ENCODE measurements at regions of chr1 and their contacts with region 1.

Region 1: GRCh38 chr1:92784639-92785500 is at the start of gene EVI5:
- DNase-seq: peak; percentile 94 to 97
- H3K4me3 ChIP-seq: peak within 1 kb of the TSS; percentile 66
- H3K4me3 Mint-ChIP-seq: peak within 1 kb of the TSS; percentile 83
- H3K27ac Mint-ChIP-seq: peak within 1 kb of the TSS; percentile 91
- H3K4me1 ChIP-seq: no peaks in the 10 kb centered on the region
- H3K4me1 Mint-ChIP-seq: peaks cover 7% of the 10 kb centered on the region
- H3K27me3 ChIP-seq: no peaks in the 10 kb centered on the region
- H3K27me3 Mint-ChIP-seq: no peaks in the 10 kb centered on the region
- CTCF ChIP-seq: peak in 1 of 2 experiments; percentile 19
- total RNA-seq, gene EVI5: 31.2 and 32.8 TPM in 2 replicates

Region 2: GRCh38 chr1:92709738-92710137 is 75.1 kb before region 1 on chr1:
- CTCF ChIA-PET with region 1: no interaction called
- POLR2A ChIA-PET with region 1: no interaction called
- intact Hi-C with region 1: no loop called
- DNase-seq: peak; percentile 24 to 34
- H3K4me3 ChIP-seq: no peak overlapping the region
- H3K4me3 Mint-ChIP-seq: no peak overlapping the region
- H3K27ac Mint-ChIP-seq: no peak overlapping the region
- H3K4me1 ChIP-seq: peaks cover 59% of the 10 kb centered on the region
- H3K4me1 Mint-ChIP-seq: peaks cover 29% of the 10 kb centered on the region
- H3K27me3 ChIP-seq: no peaks in the 10 kb centered on the region
- H3K27me3 Mint-ChIP-seq: no peaks in the 10 kb centered on the region
- CTCF ChIP-seq: no peak

Region 3: GRCh38 chr1:92749024-92749634 is 35.7 kb before region 1 on chr1:
- CTCF ChIA-PET with region 1: interaction called, 11 read pairs
- POLR2A ChIA-PET with region 1: interaction called, 3 read pairs
- intact Hi-C with region 1: loop called (anchors 2 kb)
- DNase-seq: peak in 1 of 2 experiments; percentile 49
- H3K4me3 ChIP-seq: no peak overlapping the region
- H3K4me3 Mint-ChIP-seq: no peak overlapping the region
- H3K27ac Mint-ChIP-seq: no peak overlapping the region
- H3K4me1 ChIP-seq: peaks cover 6% of the 10 kb centered on the region; the same call in 1 of the 2 replicates
- H3K4me1 Mint-ChIP-seq: peaks cover 11% of the 10 kb centered on the region
- H3K27me3 ChIP-seq: no peaks in the 10 kb centered on the region
- H3K27me3 Mint-ChIP-seq: no peaks in the 10 kb centered on the region
- CTCF ChIP-seq: peak; percentile 42 to 51

Region 4: GRCh38 chr1:92804721-92805169 is 19.9 kb after region 1 on chr1:
- CTCF ChIA-PET with region 1: no interaction called
- POLR2A ChIA-PET with region 1: interaction called, 8 read pairs
- intact Hi-C with region 1: loop called (anchors 2 kb)
- DNase-seq: peak; percentile 84 to 92
- H3K4me3 ChIP-seq: no peak overlapping the region
- H3K4me3 Mint-ChIP-seq: no peak overlapping the region
- H3K27ac Mint-ChIP-seq: peak overlapping the region; percentile 89
- H3K4me1 ChIP-seq: peaks cover 19% of the 10 kb centered on the region
- H3K4me1 Mint-ChIP-seq: peaks cover 13% of the 10 kb centered on the region
- H3K27me3 ChIP-seq: no peaks in the 10 kb centered on the region
- H3K27me3 Mint-ChIP-seq: no peaks in the 10 kb centered on the region
- CTCF ChIP-seq: no peak

Region 5: DNA sequence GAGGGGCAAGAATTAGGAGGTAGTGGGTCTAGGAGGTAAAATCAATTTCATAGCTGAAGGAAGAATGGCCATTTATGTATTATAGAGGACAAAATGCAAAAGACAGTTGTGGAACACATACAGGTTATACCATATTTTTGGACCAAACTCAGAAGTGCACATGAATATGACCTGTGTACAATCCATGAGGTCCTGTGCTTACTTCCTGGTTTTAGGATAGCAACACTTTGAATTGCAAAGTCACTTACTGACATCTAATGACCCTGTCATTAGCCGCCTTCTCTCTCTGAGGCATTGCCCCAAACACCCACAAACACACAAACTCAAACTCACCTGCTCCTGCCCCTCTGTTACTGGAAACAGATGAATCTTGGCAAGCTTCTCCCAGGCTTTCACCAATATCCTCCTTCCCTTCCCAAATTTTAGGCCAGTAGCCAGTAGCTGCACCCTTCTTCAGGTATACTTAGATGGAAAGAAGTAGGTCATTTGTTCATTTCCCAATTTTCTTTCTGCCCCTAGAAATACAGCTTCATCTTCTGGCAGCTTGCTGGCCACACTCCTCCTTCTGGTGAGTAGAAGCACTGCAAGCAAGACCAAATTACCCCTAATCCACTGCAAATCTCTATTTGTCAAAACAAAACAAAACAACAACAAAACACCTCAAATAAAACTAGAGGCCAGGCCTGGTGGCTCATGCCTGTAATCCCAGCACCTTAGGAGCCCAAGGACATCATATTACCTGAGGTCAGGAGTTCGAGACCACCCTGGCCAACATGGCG is 33.3 kb after region 1 on chr1:
- CTCF ChIA-PET with region 1: interaction called, 6 read pairs
- POLR2A ChIA-PET with region 1: no interaction called
- intact Hi-C with region 1: loop called (anchors 1 kb)
- DNase-seq: peak in 1 of 2 experiments; percentile 23
- H3K4me3 ChIP-seq: no peak overlapping the region
- H3K4me3 Mint-ChIP-seq: peak overlapping the region; percentile 15
- H3K27ac Mint-ChIP-seq: peak overlapping the region; percentile 84
- H3K4me1 ChIP-seq: peaks cover 46% of the 10 kb centered on the region
- H3K4me1 Mint-ChIP-seq: peaks cover 36% of the 10 kb centered on the region
- H3K27me3 ChIP-seq: no peaks in the 10 kb centered on the region
- H3K27me3 Mint-ChIP-seq: no peaks in the 10 kb centered on the region
- CTCF ChIP-seq: peak in 1 of 2 experiments; percentile 27

Region 6: GRCh38 chr1:92831762-92832536 is 47.1 kb after region 1 on chr1 and contains the start of gene RPL5:
- CTCF ChIA-PET with region 1: interaction called, 8 read pairs
- POLR2A ChIA-PET with region 1: interaction called, 7 read pairs
- intact Hi-C with region 1: loop called (anchors 5 kb)
- DNase-seq: peak; percentile 94 to 95
- H3K4me3 ChIP-seq: peak within 1 kb of the TSS; percentile 70
- H3K4me3 Mint-ChIP-seq: peak within 1 kb of the TSS; percentile 98
- H3K27ac Mint-ChIP-seq: peak within 1 kb of the TSS; percentile 99
- H3K4me1 ChIP-seq: peaks cover 15% of the 10 kb centered on the region
- H3K4me1 Mint-ChIP-seq: no peaks in the 10 kb centered on the region
- H3K27me3 ChIP-seq: no peaks in the 10 kb centered on the region
- H3K27me3 Mint-ChIP-seq: no peaks in the 10 kb centered on the region
- CTCF ChIP-seq: peak; percentile 70 to 80
- total RNA-seq, gene RPL5: 1,118 and 1,177 TPM in 2 replicates

Region 7: DNA sequence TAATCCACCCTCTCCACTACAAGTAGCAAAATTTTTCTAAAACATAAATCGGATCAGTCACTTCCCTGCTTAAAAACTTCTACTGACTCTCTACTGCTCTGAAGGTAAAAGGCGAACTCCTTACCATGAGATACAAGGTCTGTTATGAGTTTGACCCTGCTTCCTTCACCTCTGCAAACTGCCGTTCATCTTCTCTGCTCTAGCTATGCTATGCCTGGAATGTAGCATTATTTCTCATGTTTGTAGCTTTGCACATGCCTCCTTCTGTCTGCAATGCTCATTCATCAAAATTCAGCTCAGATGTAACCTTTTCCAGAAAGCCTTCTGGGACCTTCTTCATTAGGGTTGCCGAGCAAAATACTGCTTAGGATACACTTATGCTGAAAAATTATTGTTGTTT is 77.7 kb after region 1 on chr1:
- CTCF ChIA-PET with region 1: no interaction called
- POLR2A ChIA-PET with region 1: no interaction called
- intact Hi-C with region 1: no loop called
- DNase-seq: no peak
- H3K4me3 ChIP-seq: no peak overlapping the region
- H3K4me3 Mint-ChIP-seq: no peak overlapping the region
- H3K27ac Mint-ChIP-seq: no peak overlapping the region
- H3K4me1 ChIP-seq: no peaks in the 10 kb centered on the region
- H3K4me1 Mint-ChIP-seq: peaks cover 14% of the 10 kb centered on the region
- H3K27me3 ChIP-seq: no peaks in the 10 kb centered on the region
- H3K27me3 Mint-ChIP-seq: no peaks in the 10 kb centered on the region
- CTCF ChIP-seq: no peak